ENCODE measurements at regions of chr10 and their contacts with region 1.

Region 1: GRCh38 chr10:77846718-77847630 is 79.6 kb downstream of the DLG5 start:
- DNase-seq: peak; percentile 87
- H3K4me3 ChIP-seq: no peak overlapping the region
- H3K27ac ChIP-seq: peak overlapping the region; percentile 9
- H3K4me1 ChIP-seq: peaks cover 26% of the 10 kb centered on the region
- H3K27me3 ChIP-seq: no peaks in the 10 kb centered on the region
- CTCF ChIP-seq: peak; percentile 99

Region 2: DNA sequence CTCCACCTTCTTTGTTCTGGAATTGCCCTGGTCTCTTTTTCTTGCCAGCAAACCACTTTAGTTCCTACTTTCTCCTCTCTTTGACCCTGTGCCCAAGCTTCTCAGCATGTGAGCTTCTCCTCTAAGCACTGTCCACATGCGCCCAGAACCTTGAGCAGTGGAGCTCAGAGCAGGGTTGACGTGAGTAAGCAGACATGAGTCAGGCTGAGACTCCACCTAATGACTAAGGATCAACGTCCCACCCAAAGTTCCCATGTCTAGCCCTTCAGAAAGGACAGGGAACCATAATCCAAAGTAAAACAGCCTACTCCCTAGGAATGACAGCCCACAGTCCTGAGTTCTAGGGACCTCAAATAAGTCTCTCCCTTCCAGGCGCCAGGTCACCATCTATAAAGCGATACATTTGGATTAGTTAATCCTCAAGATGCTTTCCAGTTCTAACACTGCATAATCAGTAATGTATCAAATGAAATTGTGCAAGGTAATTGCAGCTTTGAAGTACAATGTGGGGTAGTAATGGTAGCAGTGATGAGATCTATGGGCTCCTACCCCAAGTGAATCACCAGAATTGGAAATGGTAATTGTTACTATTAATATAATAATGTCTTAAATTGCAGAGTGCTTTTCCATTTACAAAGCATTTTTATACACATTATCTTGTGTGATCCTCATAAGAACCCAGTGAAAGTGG is 253.9 kb before region 1 on chr10:
- intact Hi-C with region 1: no loop called
- DNase-seq: no peak
- H3K4me3 ChIP-seq: no peak overlapping the region
- H3K27ac ChIP-seq: no peak overlapping the region
- H3K4me1 ChIP-seq: no peaks in the 10 kb centered on the region
- H3K27me3 ChIP-seq: no peaks in the 10 kb centered on the region
- CTCF ChIP-seq: no peak

Region 3: DNA sequence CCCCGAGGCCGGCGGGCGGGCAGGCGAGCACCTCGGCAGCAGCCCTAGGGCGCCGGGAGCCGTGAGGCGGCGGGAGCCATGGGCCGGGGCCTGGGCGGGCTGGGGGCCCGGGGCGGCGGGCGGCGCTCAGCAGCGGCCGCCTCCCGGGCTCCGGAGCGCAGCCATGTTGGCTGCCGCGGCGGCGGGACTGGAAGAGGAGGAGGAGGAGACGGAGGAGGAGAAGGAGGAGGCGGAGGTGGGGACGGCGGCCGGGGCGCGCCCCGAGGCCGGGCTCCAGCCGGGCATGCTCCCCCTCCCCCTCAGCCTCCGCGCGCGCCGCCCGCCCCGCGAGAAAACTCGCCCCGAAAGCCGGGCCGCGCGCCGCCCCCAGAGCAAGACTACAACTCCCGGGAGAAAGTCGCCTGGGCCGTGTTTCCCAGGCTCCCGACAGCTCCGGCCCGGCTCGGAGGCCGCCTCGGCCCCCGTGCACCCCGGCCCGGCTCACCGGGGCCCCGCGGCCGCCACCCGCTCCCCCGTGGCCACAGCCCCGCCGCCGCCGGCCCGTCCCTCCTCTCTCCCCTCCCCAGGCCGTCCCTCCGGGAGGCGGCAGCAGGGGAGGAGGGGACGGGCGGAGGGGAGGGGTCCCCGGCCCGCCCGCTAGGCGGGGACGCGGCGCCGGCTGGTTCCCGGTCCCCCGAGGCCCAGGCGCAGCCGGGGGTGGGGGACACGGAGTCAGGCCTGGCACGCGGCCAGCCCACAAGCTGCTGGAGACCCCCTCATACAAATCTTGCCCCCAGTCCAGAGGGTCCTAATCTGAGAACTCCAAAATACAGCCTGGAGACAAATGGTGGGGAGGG is 79.8 kb after region 1 on chr10 and contains the start of gene DLG5:
- intact Hi-C with region 1: loop called (anchors 5 kb)
- DNase-seq: peak; percentile 75
- H3K4me3 ChIP-seq: peak within 1 kb of the TSS; percentile 80
- H3K27ac ChIP-seq: peak within 1 kb of the TSS; percentile 53
- H3K4me1 ChIP-seq: peaks cover 9% of the 10 kb centered on the region
- H3K27me3 ChIP-seq: peaks cover 3% of the 10 kb centered on the region
- CTCF ChIP-seq: no peak
- total RNA-seq, gene DLG5: 26.1 to 47.5 TPM

Region 4: GRCh38 chr10:77983384-77984341 is 136.7 kb after region 1 on chr10:
- intact Hi-C with region 1: loop called (anchors 10 kb)
- DNase-seq: no peak
- H3K4me3 ChIP-seq: no peak overlapping the region
- H3K27ac ChIP-seq: no peak overlapping the region
- H3K4me1 ChIP-seq: no peaks in the 10 kb centered on the region
- H3K27me3 ChIP-seq: no peaks in the 10 kb centered on the region
- CTCF ChIP-seq: no peak

Region 5: DNA sequence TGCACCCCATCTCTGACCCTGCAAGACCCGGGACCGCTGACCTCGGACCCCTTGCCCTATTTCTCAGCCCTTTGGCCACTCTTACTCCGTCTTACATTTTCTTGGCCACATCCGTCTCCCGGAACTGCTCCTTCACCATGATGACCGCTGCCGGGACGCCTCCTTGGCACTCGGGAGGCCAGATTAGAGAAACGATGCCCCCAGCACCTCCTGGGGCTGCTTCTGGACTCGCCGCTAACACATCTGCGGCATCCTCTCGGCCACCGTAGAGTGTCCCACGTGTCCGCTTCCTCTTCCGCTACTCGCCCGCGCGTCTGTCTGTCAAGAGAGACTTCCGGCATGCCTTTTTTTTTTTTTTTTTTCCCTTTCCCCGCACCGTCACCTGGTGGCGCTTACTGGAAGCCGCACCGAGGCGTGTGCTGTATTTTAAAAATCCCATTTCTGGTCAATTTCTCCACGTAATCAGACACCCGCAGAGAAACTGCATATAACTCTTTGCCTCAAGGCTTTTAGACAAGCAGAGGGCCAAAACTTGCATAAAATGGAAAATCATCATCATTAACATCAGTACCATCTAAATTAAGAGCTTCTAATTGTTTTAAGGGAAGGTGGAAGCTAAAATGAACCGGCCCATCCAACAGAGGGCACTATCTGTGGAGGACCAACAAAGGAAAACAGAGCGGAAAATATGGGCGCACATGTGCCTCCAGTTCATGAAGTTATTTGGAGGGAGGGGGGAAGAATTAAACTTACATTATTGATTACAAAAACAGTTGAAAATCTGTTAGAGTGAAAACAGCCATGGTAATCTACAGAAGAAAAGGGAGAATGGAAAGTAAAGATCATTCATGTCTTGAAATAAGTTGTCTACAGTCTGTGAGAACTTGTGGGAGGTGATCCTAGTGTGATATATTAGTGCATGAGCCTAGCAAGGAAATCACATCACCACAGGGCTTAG is 182.6 kb after region 1 on chr10 and contains the start of gene POLR3A:
- intact Hi-C with region 1: loop called (anchors 5 kb)
- DNase-seq: peak; percentile 93
- H3K4me3 ChIP-seq: peak within 1 kb of the TSS; percentile 98
- H3K27ac ChIP-seq: peak within 1 kb of the TSS; percentile 82
- H3K4me1 ChIP-seq: peaks cover 10% of the 10 kb centered on the region
- H3K27me3 ChIP-seq: no peaks in the 10 kb centered on the region
- CTCF ChIP-seq: peak; percentile 60
- total RNA-seq, gene POLR3A: 11.3 to 14.6 TPM